Astrocyte of the cerebellum (primary cell): ENCODE measurements at regions of chr5 and their contacts with region 1.

Region 1: GRCh38 chr5:3475674-3476073 is 120.0 kb upstream of the IRX1 start:
- DNase-seq: no peak
- H3K4me3 ChIP-seq: no peak overlapping the region
- CTCF ChIP-seq: no peak

Region 2: DNA sequence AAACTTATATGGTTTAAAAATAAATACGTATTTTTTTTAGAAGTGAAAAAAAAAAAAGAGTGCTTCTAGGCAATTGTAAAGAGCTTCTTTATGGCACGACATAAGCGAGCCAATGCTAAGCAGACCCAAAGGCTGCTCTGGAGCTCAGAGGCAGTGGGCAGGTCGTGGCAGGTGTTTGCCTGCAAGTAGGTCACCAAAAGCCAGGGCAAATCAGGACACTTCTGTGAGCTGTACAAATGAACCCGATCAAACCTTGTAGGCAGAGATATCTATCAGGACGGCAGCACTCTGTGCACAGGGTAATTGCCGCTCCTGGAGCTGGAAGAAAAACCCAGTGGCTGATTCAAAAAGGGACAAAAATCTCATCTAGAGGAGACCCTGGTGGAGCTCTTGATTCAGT is 800.1 kb before region 1 on chr5:
- in situ Hi-C with region 1: no loop called
- DNase-seq: no peak
- H3K4me3 ChIP-seq: no peak overlapping the region
- CTCF ChIP-seq: no peak

Region 3: GRCh38 chr5:3531320-3531986 is 55.8 kb after region 1 on chr5:
- in situ Hi-C with region 1: loop called (anchors 5 kb)
- DNase-seq: no peak
- H3K4me3 ChIP-seq: no peak overlapping the region
- CTCF ChIP-seq: no peak